ENCODE measurements at regions of chr6 and their contacts with region 1.

Region 1: GRCh38 chr6:22221630-22222029 is 75.2 kb downstream of the PRL start:
- DNase-seq: peak; percentile 75 to 96
- H3K4me3 ChIP-seq: peak overlapping the region; percentile 48
- H3K27ac ChIP-seq: peak overlapping the region; percentile 98
- H3K4me1 ChIP-seq: peaks cover 40% of the 10 kb centered on the region
- H3K27me3 ChIP-seq: no peaks in the 10 kb centered on the region
- CTCF ChIP-seq: no peak

Region 2: GRCh38 chr6:21053612-21054011 is 1168.0 kb before region 1 on chr6:
- CTCF ChIA-PET with region 1: no interaction called
- POLR2A ChIA-PET with region 1: no interaction called
- intact Hi-C with region 1: no loop called
- DNase-seq: no peak
- H3K4me3 ChIP-seq: no peak overlapping the region
- H3K27ac ChIP-seq: no peak overlapping the region
- H3K4me1 ChIP-seq: no peaks in the 10 kb centered on the region
- H3K27me3 ChIP-seq: no peaks in the 10 kb centered on the region
- CTCF ChIP-seq: no peak

Region 3: GRCh38 chr6:21922086-21922485 is 299.5 kb before region 1 on chr6:
- CTCF ChIA-PET with region 1: no interaction called
- POLR2A ChIA-PET with region 1: no interaction called
- intact Hi-C with region 1: loop called (anchors 10 kb)
- DNase-seq: no peak
- H3K4me3 ChIP-seq: no peak overlapping the region
- H3K27ac ChIP-seq: no peak overlapping the region
- H3K4me1 ChIP-seq: peaks cover 21% of the 10 kb centered on the region
- H3K27me3 ChIP-seq: no peaks in the 10 kb centered on the region
- CTCF ChIP-seq: no peak

Region 4: GRCh38 chr6:22036275-22036674 is 185.4 kb before region 1 on chr6:
- CTCF ChIA-PET with region 1: no interaction called
- POLR2A ChIA-PET with region 1: no interaction called
- intact Hi-C with region 1: loop called (anchors 10 kb)
- DNase-seq: peak; percentile 84 to 91
- H3K4me3 ChIP-seq: peak overlapping the region; percentile 18; the same call in 1 of the 2 replicates
- H3K27ac ChIP-seq: peak overlapping the region; percentile 34; the same call in 1 of the 2 replicates
- H3K4me1 ChIP-seq: peaks cover 22% of the 10 kb centered on the region
- H3K27me3 ChIP-seq: no peaks in the 10 kb centered on the region
- CTCF ChIP-seq: no peak

Region 5: GRCh38 chr6:22145823-22146677 is 75.6 kb before region 1 on chr6:
- CTCF ChIA-PET with region 1: no interaction called
- POLR2A ChIA-PET with region 1: no interaction called
- intact Hi-C with region 1: loop called (anchors 10 kb)
- DNase-seq: no peak
- H3K4me3 ChIP-seq: no peak overlapping the region
- H3K27ac ChIP-seq: no peak overlapping the region
- H3K4me1 ChIP-seq: peaks cover 13% of the 10 kb centered on the region
- H3K27me3 ChIP-seq: no peaks in the 10 kb centered on the region
- CTCF ChIP-seq: no peak

Region 6: GRCh38 chr6:22236626-22237414 is 15.2 kb after region 1 on chr6:
- CTCF ChIA-PET with region 1: no interaction called
- POLR2A ChIA-PET with region 1: interaction called, 3 read pairs
- intact Hi-C with region 1: loop called (anchors 1 kb)
- DNase-seq: peak; percentile 62 to 84
- H3K4me3 ChIP-seq: 0 out of 2 replicates have a peak overlapping the region, but pooled peaks have one; percentile 3
- H3K27ac ChIP-seq: peak overlapping the region; percentile 27
- H3K4me1 ChIP-seq: peaks cover 21% of the 10 kb centered on the region
- H3K27me3 ChIP-seq: no peaks in the 10 kb centered on the region
- CTCF ChIP-seq: no peak

Region 7: GRCh38 chr6:22372922-22373321 is 151.3 kb after region 1 on chr6:
- CTCF ChIA-PET with region 1: no interaction called
- POLR2A ChIA-PET with region 1: no interaction called
- intact Hi-C with region 1: no loop called
- DNase-seq: no peak
- H3K4me3 ChIP-seq: no peak overlapping the region
- H3K27ac ChIP-seq: no peak overlapping the region
- H3K4me1 ChIP-seq: no peaks in the 10 kb centered on the region
- H3K27me3 ChIP-seq: no peaks in the 10 kb centered on the region
- CTCF ChIP-seq: no peak

Region 8: GRCh38 chr6:22512686-22513427 is 291.2 kb after region 1 on chr6:
- CTCF ChIA-PET with region 1: no interaction called
- POLR2A ChIA-PET with region 1: no interaction called
- intact Hi-C with region 1: no loop called
- DNase-seq: no peak
- H3K4me3 ChIP-seq: no peak overlapping the region
- H3K27ac ChIP-seq: no peak overlapping the region
- H3K4me1 ChIP-seq: no peaks in the 10 kb centered on the region
- H3K27me3 ChIP-seq: no peaks in the 10 kb centered on the region
- CTCF ChIP-seq: no peak

Region 9: DNA sequence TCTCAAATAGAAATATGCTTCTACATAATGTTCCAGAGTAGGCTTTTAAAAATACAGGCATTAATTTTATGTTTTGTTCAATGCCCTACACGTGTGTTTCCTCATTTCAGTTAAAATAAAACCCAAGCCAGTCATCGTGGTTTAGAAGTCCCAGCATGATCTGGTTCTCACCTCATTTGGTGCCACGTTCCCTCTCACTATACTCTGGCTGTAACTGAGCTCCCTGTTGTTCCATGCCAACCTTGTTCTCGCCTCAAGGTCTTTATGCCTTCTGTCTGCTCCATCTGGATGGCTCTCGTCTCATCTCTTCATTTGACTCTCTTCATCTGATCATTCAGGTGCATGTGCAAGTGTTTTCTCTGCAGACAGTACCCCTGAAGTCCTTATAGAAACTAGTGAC is 380.4 kb after region 1 on chr6:
- CTCF ChIA-PET with region 1: no interaction called
- POLR2A ChIA-PET with region 1: no interaction called
- intact Hi-C with region 1: no loop called
- DNase-seq: no peak
- H3K4me3 ChIP-seq: no peak overlapping the region
- H3K27ac ChIP-seq: no peak overlapping the region
- H3K4me1 ChIP-seq: no peaks in the 10 kb centered on the region
- H3K27me3 ChIP-seq: no peaks in the 10 kb centered on the region
- CTCF ChIP-seq: no peak

Region 10: DNA sequence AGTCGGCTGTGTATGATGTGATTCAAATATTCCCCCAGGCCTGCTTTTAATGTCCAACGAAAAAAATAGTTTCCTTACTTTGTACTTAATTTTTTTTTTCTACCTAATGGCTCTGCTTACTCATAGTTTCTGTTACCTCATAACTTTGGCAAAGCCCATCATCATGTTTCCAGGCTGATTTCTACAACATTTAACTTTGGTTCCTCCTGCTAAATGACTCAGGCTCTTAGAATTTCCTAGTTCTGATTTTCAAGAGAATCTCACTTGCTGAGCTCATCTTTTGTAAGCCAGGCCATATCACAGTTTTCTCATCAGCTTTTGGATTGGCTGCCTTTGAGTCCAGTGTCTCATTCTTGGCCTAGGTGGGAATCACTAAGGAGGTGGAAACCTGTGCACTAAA is 670.8 kb after region 1 on chr6:
- CTCF ChIA-PET with region 1: no interaction called
- POLR2A ChIA-PET with region 1: interaction called, 6 read pairs
- intact Hi-C with region 1: loop called (anchors 5 kb)
- DNase-seq: peak; percentile 53 to 89
- H3K4me3 ChIP-seq: no peak overlapping the region
- H3K27ac ChIP-seq: peak overlapping the region; percentile 90
- H3K4me1 ChIP-seq: peaks cover 25% of the 10 kb centered on the region
- H3K27me3 ChIP-seq: no peaks in the 10 kb centered on the region
- CTCF ChIP-seq: no peak

Measured in PC-9 (cell line).